Stomach (tissue), 19 donors: ENCODE measurements at regions of chr4 and their contacts with region 1.

Region 1: DNA sequence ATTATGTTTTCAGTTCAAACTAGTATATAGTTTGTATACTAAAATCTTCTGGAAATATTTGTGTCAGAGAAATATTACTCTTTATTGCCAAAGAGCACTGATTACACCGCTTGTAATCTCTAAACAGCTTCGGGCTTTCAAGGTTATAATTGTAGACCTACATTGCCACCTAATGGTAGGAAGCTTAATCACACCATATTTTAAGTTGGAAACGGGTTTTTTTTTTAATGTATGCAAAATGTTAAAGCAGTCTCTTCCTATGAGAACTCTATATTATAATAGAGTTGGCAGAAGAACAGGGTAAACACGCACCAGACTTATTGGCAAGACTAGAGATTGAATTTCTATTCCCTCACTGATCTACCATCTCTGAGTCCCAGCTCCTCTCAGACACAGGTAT is 19.5 kb upstream of the NFXL1 start:
- DNase-seq: peak in 1 of 2 donors; percentile 68
- H3K4me3 ChIP-seq: no peak overlapping the region
- H3K27ac ChIP-seq: no peak overlapping the region
- H3K4me1 ChIP-seq: peaks cover 0 to 8% (median 3%) of the 10 kb centered on the region in 4 donors
- H3K27me3 ChIP-seq: no peaks in the 10 kb centered on the region
- CTCF ChIP-seq: peak in 5 of 7 experiments; percentile 32 to 64 (median 43)
- EP300 ChIP-seq: no peak
- POLR2A ChIP-seq: no peak

Region 2: GRCh38 chr4:47669946-47670345 is 263.9 kb before region 1 on chr4:
- intact Hi-C with region 1: loop called (anchors 10 kb)
- DNase-seq: peak in 1 of 2 donors; percentile 66
- H3K4me3 ChIP-seq: no peak overlapping the region
- H3K27ac ChIP-seq: no peak overlapping the region
- H3K4me1 ChIP-seq: peaks cover 0 to 12% (median 5%) of the 10 kb centered on the region in 4 donors
- H3K27me3 ChIP-seq: peaks cover 0 to 3% (median 0%) of the 10 kb centered on the region in 3 donors
- CTCF ChIP-seq: no peak
- EP300 ChIP-seq: no peak
- POLR2A ChIP-seq: no peak

Region 3: DNA sequence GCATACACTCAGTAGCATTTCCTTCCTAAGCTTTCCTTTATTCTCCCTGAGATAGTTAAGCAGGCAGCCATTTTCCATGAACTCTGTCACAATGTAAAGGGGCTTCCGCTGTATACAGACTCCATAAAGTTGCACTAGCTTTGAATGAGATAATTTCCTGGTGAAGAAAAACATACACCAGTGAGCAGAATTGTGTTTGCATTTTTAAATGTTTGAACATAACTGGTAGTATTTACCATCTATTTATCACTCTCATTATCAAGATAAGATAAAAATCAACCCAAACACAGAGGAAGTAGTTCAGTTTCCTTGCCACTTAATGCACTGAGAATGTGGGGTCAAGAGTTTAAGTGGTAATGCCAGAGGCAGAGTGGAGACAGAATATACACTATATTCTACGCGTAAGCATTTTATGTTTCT is 146.1 kb after region 1 on chr4:
- intact Hi-C with region 1: loop called (anchors 10 kb)
- DNase-seq: peak in 1 of 2 donors; percentile 19
- H3K4me3 ChIP-seq: no peak overlapping the region
- H3K27ac ChIP-seq: no peak overlapping the region
- H3K4me1 ChIP-seq: peaks cover 0 to 6% (median 0%) of the 10 kb centered on the region in 4 donors
- H3K27me3 ChIP-seq: no peaks in the 10 kb centered on the region
- CTCF ChIP-seq: no peak
- EP300 ChIP-seq: no peak
- POLR2A ChIP-seq: no peak